Naive thymus-derived CD4-positive, alpha-beta T cell (primary cell): ENCODE measurements at regions of chr14 and their contacts with region 1.

Region 1: GRCh38 chr14:65412032-65412846 is at the start of gene FUT8:
- DNase-seq: peak; percentile 90 to 97 (median 95)
- ATAC-seq: peak; percentile 93
- H3K4me3 ChIP-seq: peak within 1 kb of the TSS; percentile 92
- H3K4me3 Mint-ChIP-seq: peak within 1 kb of the TSS; percentile 85 to 99 (median 97)
- H3K27ac ChIP-seq: peak within 1 kb of the TSS; percentile 86
- H3K27ac Mint-ChIP-seq: peak within 1 kb of the TSS; percentile 93 to 99 (median 96)
- H3K4me1 ChIP-seq: peaks cover 0 to 14% of the 10 kb centered on the region in 2 donors
- H3K4me1 Mint-ChIP-seq: peaks cover 23 to 52% (median 48%) of the 10 kb centered on the region in 7 donors
- H3K27me3 ChIP-seq: no peaks in the 10 kb centered on the region
- H3K27me3 Mint-ChIP-seq: no peaks in the 10 kb centered on the region
- total RNA-seq, gene FUT8: 38.4 to 107 (median 43.4) TPM

Region 2: DNA sequence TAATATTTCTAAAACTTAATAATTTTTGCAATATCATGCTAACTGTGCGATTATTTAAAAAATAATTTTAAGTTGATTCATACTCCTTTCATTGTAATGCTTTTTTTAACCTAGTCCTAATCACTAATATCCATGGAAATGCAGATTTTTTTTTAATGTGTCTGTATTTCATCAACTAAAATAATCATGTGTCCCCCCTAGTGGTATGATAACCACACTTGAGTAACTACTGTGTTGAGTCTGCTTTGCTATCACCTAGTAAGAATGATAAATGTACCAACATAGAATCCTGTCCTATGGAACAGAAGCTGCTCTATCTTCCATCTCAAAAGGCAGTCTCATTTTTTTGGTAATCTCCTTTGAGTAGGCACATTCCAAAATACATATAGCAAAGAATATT is 1578.5 kb before region 1 on chr14:
- CTCF ChIA-PET with region 1: no interaction called
- POLR2A ChIA-PET with region 1: no interaction called
- intact Hi-C with region 1: no loop called
- DNase-seq: no peak
- ATAC-seq: no peak
- H3K4me3 ChIP-seq: no peak overlapping the region
- H3K4me3 Mint-ChIP-seq: no peak overlapping the region
- H3K27ac ChIP-seq: no peak overlapping the region
- H3K27ac Mint-ChIP-seq: peak overlapping the region in 1 of 9 donors; percentile 4
- H3K4me1 ChIP-seq: no peaks in the 10 kb centered on the region
- H3K4me1 Mint-ChIP-seq: no peaks in the 10 kb centered on the region
- H3K27me3 ChIP-seq: no peaks in the 10 kb centered on the region
- H3K27me3 Mint-ChIP-seq: peaks cover 0 to 5% (median 0%) of the 10 kb centered on the region in 5 donors

Region 3: DNA sequence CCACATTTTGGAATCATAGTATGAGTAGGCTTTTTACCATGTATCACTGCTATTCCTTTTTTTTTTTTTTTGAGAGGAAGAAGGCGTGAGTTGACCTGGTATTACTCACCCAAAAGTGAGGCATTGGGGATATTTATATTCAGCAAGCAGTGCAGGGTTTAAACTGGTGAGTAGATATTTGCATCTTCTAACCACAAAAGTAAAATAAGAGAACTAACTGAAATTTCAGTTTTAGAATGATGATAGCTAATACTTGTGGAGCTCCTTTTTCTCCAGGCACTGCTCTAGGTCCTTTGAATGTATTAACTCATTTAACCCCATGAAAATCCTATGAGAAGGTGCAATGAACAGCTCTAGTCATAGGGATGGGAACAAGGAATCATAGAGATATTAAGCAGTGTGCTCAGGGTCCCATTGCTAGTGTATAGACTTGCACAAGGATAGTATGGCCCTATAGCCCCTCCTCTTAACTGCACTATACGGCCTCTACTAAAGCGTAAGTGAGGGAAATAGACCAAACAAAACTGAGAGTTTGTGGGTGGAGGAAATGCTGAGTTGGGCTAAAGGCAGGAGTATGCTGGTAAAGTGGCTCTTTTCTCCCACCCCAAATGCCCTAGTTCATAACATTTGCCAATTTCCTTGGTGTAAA is 205.7 kb before region 1 on chr14:
- CTCF ChIA-PET with region 1: interaction called, 3 read pairs
- POLR2A ChIA-PET with region 1: interaction called, 11 read pairs
- intact Hi-C with region 1: loop called (anchors 1 to 5 kb)
- DNase-seq: peak in 1 of 9 donors; percentile 36
- ATAC-seq: peak; percentile 73
- H3K4me3 ChIP-seq: no peak overlapping the region
- H3K4me3 Mint-ChIP-seq: peak overlapping the region in 9 of 10 donors; percentile 41 to 85 (median 70)
- H3K27ac ChIP-seq: peak overlapping the region; percentile 14
- H3K27ac Mint-ChIP-seq: peak overlapping the region; percentile 81 to 93 (median 83)
- H3K4me1 ChIP-seq: peaks cover 40 to 45% of the 10 kb centered on the region in 2 donors
- H3K4me1 Mint-ChIP-seq: peaks cover 35 to 69% (median 58%) of the 10 kb centered on the region in 7 donors
- H3K27me3 ChIP-seq: no peaks in the 10 kb centered on the region
- H3K27me3 Mint-ChIP-seq: no peaks in the 10 kb centered on the region

Region 4: DNA sequence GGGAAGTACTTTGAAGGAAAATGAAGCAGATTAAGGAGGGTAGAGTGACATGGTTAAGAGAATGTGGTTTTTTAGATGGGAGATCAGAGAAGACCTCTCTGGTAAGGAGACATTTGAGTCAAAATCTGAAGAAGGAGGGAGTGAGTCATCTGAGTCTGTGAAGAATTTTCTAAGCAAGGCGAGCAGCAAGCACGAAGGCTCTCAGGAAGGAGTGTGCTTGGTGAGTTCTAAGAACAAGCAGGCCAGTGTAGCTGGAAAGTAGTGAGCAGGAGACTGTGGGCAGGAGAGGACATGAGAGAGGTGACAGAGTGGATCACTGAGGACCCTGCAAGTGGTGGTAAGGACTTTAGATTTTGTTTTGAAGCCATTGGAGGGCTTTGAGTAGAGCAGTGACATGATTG is 76.0 kb before region 1 on chr14:
- CTCF ChIA-PET with region 1: no interaction called
- POLR2A ChIA-PET with region 1: no interaction called
- intact Hi-C with region 1: loop called (anchors 2 kb)
- DNase-seq: peak in 2 of 9 donors; percentile 10 to 60
- ATAC-seq: peak; percentile 37
- H3K4me3 ChIP-seq: no peak overlapping the region
- H3K4me3 Mint-ChIP-seq: peak overlapping the region in 6 of 10 donors; percentile 2 to 83 (median 4)
- H3K27ac ChIP-seq: no peak overlapping the region
- H3K27ac Mint-ChIP-seq: peak overlapping the region; percentile 16 to 91 (median 64)
- H3K4me1 ChIP-seq: peaks cover 0 to 16% of the 10 kb centered on the region in 2 donors
- H3K4me1 Mint-ChIP-seq: peaks cover 21 to 60% (median 42%) of the 10 kb centered on the region in 7 donors
- H3K27me3 ChIP-seq: no peaks in the 10 kb centered on the region
- H3K27me3 Mint-ChIP-seq: no peaks in the 10 kb centered on the region

Region 5: GRCh38 chr14:65847075-65847847 is 435.0 kb after region 1 on chr14:
- CTCF ChIA-PET with region 1: interaction called, 11 read pairs
- POLR2A ChIA-PET with region 1: interaction called, 8 read pairs
- intact Hi-C with region 1: loop called (anchors 1 kb)
- DNase-seq: peak in 8 of 9 donors; percentile 67 to 94 (median 90)
- ATAC-seq: peak; percentile 90
- H3K4me3 ChIP-seq: peak overlapping the region; percentile 38
- H3K4me3 Mint-ChIP-seq: peak overlapping the region; percentile 70 to 88 (median 80)
- H3K27ac ChIP-seq: peak overlapping the region; percentile 74
- H3K27ac Mint-ChIP-seq: peak overlapping the region; percentile 91 to 99 (median 94)
- H3K4me1 ChIP-seq: peaks cover 63 to 85% of the 10 kb centered on the region in 2 donors
- H3K4me1 Mint-ChIP-seq: peaks cover 39 to 92% (median 88%) of the 10 kb centered on the region in 7 donors
- H3K27me3 ChIP-seq: no peaks in the 10 kb centered on the region
- H3K27me3 Mint-ChIP-seq: no peaks in the 10 kb centered on the region

Region 6: DNA sequence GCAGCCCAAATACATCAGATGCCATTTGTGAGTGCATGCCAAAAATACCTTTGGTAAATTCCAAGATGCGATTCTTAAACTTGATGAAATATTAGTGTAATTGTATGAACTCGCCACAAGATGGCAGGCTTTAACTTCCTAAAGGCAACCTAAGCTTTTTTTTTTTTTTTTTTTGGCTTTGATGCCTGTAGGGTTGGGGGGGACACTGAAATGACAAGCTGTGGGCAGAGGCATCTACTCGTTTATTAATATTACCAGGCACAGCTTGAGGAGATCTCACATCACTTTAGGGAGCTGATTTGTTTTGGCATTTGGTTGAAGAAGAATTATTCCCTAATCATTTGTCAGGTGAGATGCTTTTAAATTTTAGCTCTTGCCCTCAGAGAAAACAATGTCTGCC is 947.3 kb after region 1 on chr14:
- CTCF ChIA-PET with region 1: interaction called, 14 read pairs
- POLR2A ChIA-PET with region 1: no interaction called
- intact Hi-C with region 1: no loop called
- DNase-seq: peak in 7 of 9 donors; percentile 29 to 58 (median 42)
- ATAC-seq: peak; percentile 51
- H3K4me3 ChIP-seq: no peak overlapping the region
- H3K4me3 Mint-ChIP-seq: no peak overlapping the region
- H3K27ac ChIP-seq: no peak overlapping the region
- H3K27ac Mint-ChIP-seq: no peak overlapping the region
- H3K4me1 ChIP-seq: no peaks in the 10 kb centered on the region
- H3K4me1 Mint-ChIP-seq: peaks cover 0 to 2% (median 0%) of the 10 kb centered on the region in 7 donors
- H3K27me3 ChIP-seq: no peaks in the 10 kb centered on the region
- H3K27me3 Mint-ChIP-seq: peaks cover 0 to 18% (median 0%) of the 10 kb centered on the region in 5 donors

Region 7: DNA sequence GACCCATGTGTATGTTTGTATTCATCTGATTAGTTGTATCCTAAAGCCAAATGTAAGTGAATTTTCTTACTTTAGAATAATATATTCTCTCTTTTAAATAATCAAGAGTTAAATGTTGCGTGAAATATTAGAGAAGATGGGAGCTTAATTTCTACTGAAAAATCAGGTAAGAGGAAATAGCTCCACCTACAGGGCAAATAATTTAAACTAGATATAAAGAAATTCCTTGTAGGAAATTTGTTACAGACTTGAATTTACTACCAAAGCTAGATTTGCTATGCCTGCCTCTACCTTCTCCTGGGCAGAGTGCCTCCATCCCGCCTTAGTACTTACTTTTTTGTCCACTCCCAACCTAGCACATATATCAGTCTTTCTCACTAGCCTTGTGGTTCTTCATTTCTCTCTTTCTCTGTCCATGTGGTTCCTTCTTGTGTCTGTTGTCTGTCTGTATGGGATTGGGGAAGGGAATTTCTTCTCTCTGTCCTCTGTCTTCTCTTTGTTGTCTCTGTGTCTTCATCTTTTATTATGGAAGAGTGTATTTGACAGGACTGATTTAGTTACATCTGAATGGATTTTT is 1873.7 kb after region 1 on chr14:
- CTCF ChIA-PET with region 1: interaction called, 4 read pairs
- POLR2A ChIA-PET with region 1: no interaction called
- intact Hi-C with region 1: loop called in 1 of 2 experiments (anchors 10 kb)
- DNase-seq: peak in 6 of 9 donors; percentile 3 to 37 (median 30)
- ATAC-seq: no peak
- H3K4me3 ChIP-seq: no peak overlapping the region
- H3K4me3 Mint-ChIP-seq: no peak overlapping the region
- H3K27ac ChIP-seq: no peak overlapping the region
- H3K27ac Mint-ChIP-seq: peak overlapping the region in 1 of 9 donors; percentile 83
- H3K4me1 ChIP-seq: no peaks in the 10 kb centered on the region
- H3K4me1 Mint-ChIP-seq: peaks cover 0 to 5% (median 0%) of the 10 kb centered on the region in 7 donors
- H3K27me3 ChIP-seq: no peaks in the 10 kb centered on the region
- H3K27me3 Mint-ChIP-seq: no peaks in the 10 kb centered on the region